Activated CD8-positive, alpha-beta T cell treated with anti-CD3 and anti-CD28 coated beads, Interleukin-2, amount 10 ng/mL, durations not matched to agents 7 days and 5 days (primary cell): ENCODE measurements at regions of chr10 and their contacts with region 1.

Region 1: DNA sequence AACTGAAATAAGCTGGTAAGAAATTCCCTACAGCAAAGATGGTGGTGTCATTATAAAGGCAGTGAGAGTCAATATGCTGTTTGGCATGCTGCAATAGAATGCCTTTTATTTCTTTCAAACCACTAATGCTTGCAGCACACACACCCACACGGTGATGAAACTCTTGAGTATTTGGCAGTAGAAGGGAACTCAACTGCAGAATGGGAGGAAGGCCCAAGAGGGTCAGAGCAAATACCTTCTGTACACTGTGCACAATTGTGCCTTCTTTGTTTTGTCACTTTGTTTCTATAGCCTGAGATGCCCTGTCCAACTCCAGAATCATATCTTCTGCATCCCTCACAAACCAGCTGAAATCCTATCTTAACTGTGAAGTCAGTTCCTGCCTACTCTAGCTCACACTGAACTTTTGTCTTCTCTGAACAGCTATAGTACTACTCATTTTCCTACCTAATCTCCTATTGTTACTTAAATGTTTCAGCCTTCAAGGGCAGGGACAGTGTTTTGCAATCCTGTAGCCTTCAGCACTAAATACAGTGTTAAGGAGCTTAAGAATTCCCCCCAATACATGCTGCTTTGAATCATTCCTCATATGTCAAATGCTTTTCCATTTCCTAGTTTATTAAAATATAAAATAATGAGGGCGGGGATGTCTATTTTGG is 22.2 kb downstream of the MMS19 start:
- DNase-seq: no peak
- ATAC-seq: no peak
- H3K4me3 Mint-ChIP-seq: no peak overlapping the region
- H3K27ac Mint-ChIP-seq: no peak overlapping the region
- H3K4me1 Mint-ChIP-seq: peaks cover 2% of the 10 kb centered on the region
- H3K27me3 Mint-ChIP-seq: no peaks in the 10 kb centered on the region

Region 2: DNA sequence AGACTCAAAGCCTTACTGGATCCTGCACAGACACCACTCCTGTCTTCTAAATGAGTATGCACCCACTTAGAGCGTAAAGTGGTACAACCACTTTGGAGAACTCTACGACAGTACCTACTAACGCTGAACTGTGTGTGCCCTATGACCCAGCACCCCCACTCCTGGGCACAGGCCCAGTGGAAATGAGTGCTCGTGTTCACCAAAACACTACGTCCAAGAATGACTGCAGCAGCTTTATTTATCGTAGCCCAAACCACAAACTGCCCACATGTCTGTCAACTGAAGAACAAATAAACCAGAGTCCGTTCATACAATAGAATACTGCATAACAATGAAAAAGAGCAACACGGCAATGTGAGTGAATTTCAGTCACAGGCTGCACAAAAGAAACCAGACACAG is 997.7 kb before region 1 on chr10:
- CTCF ChIA-PET with region 1: no interaction called
- POLR2A ChIA-PET with region 1: no interaction called
- DNase-seq: no peak
- ATAC-seq: no peak
- H3K4me3 Mint-ChIP-seq: no peak overlapping the region
- H3K27ac Mint-ChIP-seq: no peak overlapping the region
- H3K4me1 Mint-ChIP-seq: no peaks in the 10 kb centered on the region
- H3K27me3 Mint-ChIP-seq: peaks cover 14% of the 10 kb centered on the region

Region 3: GRCh38 chr10:97445722-97446639 is 30.1 kb before region 1 on chr10 and contains the starts of genes EXOSC1 and ZDHHC16:
- CTCF ChIA-PET with region 1: no interaction called
- POLR2A ChIA-PET with region 1: no interaction called
- DNase-seq: peak; percentile 94
- ATAC-seq: peak; percentile 98
- H3K4me3 Mint-ChIP-seq: peak within 1 kb of the TSS; percentile 98
- H3K27ac Mint-ChIP-seq: peak within 1 kb of the TSS; percentile 92
- H3K4me1 Mint-ChIP-seq: peaks cover 40% of the 10 kb centered on the region
- H3K27me3 Mint-ChIP-seq: no peaks in the 10 kb centered on the region
- total RNA-seq, gene EXOSC1: 47.1 to 48.2 TPM
- total RNA-seq, gene ZDHHC16: 35.8 to 36.2 TPM

Region 4: GRCh38 chr10:97463363-97464132 is 12.5 kb before region 1 on chr10:
- CTCF ChIA-PET with region 1: interaction called, 17 read pairs
- POLR2A ChIA-PET with region 1: no interaction called
- DNase-seq: peak; percentile 54
- ATAC-seq: peak; percentile 54
- H3K4me3 Mint-ChIP-seq: no peak overlapping the region
- H3K27ac Mint-ChIP-seq: peak overlapping the region; percentile 3
- H3K4me1 Mint-ChIP-seq: no peaks in the 10 kb centered on the region
- H3K27me3 Mint-ChIP-seq: no peaks in the 10 kb centered on the region

Region 5: DNA sequence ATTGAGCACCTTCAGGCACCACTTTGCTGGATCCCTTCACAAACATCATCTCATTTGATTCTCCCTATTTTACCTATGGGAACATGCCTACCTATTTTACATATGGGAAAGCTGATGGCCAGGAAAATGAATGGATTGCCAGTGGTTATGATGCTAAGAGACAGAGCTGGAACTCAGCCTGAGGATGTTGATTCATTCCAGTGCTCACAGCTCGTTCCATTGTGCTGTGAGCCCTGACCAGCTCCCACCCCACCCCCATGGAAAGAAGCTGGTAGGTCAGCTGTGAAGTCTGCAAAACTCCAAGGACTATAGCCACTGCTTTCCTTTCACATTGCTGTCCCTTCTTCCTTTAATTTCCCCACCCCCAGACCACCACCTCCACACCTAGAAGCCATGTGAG is 32.3 kb after region 1 on chr10:
- CTCF ChIA-PET with region 1: no interaction called
- POLR2A ChIA-PET with region 1: no interaction called
- DNase-seq: no peak
- ATAC-seq: no peak
- H3K4me3 Mint-ChIP-seq: no peak overlapping the region
- H3K27ac Mint-ChIP-seq: no peak overlapping the region
- H3K4me1 Mint-ChIP-seq: peaks cover 2% of the 10 kb centered on the region
- H3K27me3 Mint-ChIP-seq: peaks cover 13% of the 10 kb centered on the region